ENCODE measurements at regions of chr2 and their contacts with region 1.

Region 1: DNA sequence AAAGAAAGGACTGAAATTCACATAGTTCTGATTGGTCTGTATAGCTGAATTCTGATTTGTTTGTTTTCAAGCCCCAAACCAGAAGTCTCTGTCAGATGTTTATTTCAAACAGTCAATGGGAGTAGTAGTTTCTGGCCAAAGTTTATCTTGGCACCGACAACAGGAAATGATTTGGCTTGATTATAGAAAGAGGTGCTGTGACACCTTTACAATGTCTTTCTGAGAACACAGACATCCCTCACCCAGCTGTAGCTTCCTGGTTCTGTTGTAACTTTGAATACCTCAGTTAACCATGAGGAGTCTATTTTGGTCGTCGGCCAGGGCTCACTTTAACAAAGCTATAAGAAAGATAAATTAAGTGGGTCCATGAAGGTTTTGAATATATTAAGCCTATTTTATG is 545.0 kb upstream of the ZNF804A start:
- DNase-seq: no peak
- ATAC-seq: no peak
- H3K4me3 ChIP-seq: no peak overlapping the region
- H3K4me3 Mint-ChIP-seq: no peak overlapping the region
- H3K27ac ChIP-seq: no peak overlapping the region
- H3K27ac Mint-ChIP-seq: no peak overlapping the region
- H3K4me1 ChIP-seq: no peaks in the 10 kb centered on the region
- H3K4me1 Mint-ChIP-seq: no peaks in the 10 kb centered on the region
- H3K27me3 ChIP-seq: no peaks in the 10 kb centered on the region
- H3K27me3 Mint-ChIP-seq: no peaks in the 10 kb centered on the region

Region 2: DNA sequence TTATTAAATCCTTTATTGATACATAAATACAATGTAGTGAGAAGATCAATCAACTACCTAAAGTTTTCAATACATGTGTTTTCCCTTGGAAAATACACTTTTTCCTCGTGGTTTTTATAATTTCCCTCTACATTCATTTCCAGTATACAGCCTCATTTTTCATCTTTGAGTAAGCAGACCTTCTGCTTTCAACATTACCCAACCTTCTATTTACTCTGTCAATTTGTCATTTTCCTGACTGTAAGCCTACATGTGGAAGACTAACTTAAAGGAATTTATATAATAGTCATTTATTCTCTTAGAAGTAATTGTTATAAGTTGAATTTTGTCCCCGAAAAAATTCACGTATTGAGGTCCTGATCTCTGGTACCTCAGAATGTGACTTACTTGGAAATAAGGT is 335.1 kb before region 1 on chr2:
- CTCF ChIA-PET with region 1: no interaction called
- POLR2A ChIA-PET with region 1: no interaction called
- intact Hi-C with region 1: no loop called
- DNase-seq: no peak
- ATAC-seq: no peak
- H3K4me3 ChIP-seq: no peak overlapping the region
- H3K4me3 Mint-ChIP-seq: no peak overlapping the region
- H3K27ac ChIP-seq: no peak overlapping the region
- H3K27ac Mint-ChIP-seq: no peak overlapping the region
- H3K4me1 ChIP-seq: no peaks in the 10 kb centered on the region
- H3K4me1 Mint-ChIP-seq: no peaks in the 10 kb centered on the region
- H3K27me3 ChIP-seq: no peaks in the 10 kb centered on the region
- H3K27me3 Mint-ChIP-seq: no peaks in the 10 kb centered on the region

Region 3: DNA sequence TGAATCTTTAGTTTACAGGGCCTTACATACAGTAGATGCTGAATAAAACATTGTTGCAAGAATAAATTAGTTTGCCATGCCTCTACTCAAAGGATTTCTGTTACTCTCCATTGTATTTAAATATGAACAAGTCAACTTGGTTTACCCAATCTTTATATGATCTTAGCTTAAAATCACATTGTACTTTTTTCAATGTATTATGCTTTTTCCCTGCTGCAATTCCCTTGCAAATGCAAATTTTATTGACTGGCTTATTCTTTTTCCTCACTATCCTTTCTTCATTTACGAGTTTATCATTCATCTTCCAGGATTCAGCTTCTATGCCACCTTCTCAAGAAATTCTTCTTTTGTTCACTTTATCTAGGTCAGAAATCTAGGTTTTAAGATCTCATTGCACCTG is 26.4 kb before region 1 on chr2:
- CTCF ChIA-PET with region 1: no interaction called
- POLR2A ChIA-PET with region 1: no interaction called
- intact Hi-C with region 1: loop called in 1 of 2 experiments (anchors 1 kb)
- DNase-seq: no peak
- ATAC-seq: no peak
- H3K4me3 ChIP-seq: no peak overlapping the region
- H3K4me3 Mint-ChIP-seq: no peak overlapping the region
- H3K27ac ChIP-seq: no peak overlapping the region
- H3K27ac Mint-ChIP-seq: no peak overlapping the region
- H3K4me1 ChIP-seq: no peaks in the 10 kb centered on the region
- H3K4me1 Mint-ChIP-seq: no peaks in the 10 kb centered on the region
- H3K27me3 ChIP-seq: no peaks in the 10 kb centered on the region
- H3K27me3 Mint-ChIP-seq: no peaks in the 10 kb centered on the region